Activated CD8-positive, alpha-beta T cell treated with anti-CD3 and anti-CD28 coated beads for 36 hours (primary cell): ENCODE measurements at regions of chr14 and their contacts with region 1.

Region 1: DNA sequence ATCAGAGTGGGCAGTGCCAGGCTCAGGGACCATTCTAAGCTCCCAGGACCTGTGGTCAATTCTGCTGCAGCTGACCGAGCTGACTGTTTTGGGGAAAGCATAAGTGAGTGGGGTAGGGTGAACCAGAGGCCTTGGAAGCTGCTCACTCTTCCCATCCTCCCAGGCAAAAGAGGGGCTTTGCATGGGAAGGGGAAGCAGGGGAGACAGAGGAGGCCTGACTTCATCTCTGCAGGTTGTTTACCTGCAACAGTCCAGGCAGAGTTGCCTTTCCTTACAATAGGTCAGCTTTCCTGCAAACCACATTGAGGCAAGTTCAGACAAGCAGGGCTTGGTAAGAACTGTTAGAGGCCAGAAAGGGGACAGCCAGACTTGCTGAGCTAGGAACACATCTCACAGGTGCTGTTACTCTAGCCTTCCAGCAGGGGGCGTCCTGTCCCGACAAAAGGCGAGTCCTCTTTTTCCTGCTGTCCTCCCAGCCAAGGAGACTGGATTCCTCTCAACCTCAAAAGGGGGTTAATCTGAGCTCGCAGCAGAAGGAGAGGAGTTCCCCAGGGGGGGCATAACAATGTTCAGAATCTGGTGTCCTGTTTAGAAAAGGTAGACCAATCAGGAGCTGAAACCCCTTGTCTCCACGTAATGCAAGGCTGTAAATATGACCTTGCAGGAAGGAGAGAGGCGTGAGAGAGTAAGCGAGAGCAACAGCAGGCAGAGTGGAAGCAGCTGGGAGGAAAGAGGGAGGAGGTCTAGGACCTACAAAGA is 4.3 kb upstream of the DHRS2 start:
- DNase-seq: peak; percentile 73
- ATAC-seq: peak; percentile 89
- H3K4me3 Mint-ChIP-seq: peak overlapping the region; percentile 42
- H3K27ac Mint-ChIP-seq: no peak overlapping the region
- H3K4me1 Mint-ChIP-seq: peaks cover 4% of the 10 kb centered on the region
- H3K27me3 Mint-ChIP-seq: no peaks in the 10 kb centered on the region
- CTCF ChIP-seq: peak; percentile 97

Region 2: GRCh38 chr14:23588884-23589598 is 42.8 kb before region 1 on chr14:
- CTCF ChIA-PET with region 1: interaction called, 65 read pairs
- POLR2A ChIA-PET with region 1: no interaction called
- intact Hi-C with region 1: no loop called
- DNase-seq: peak; percentile 91
- ATAC-seq: peak; percentile 100
- H3K4me3 Mint-ChIP-seq: no peak overlapping the region
- H3K27ac Mint-ChIP-seq: no peak overlapping the region
- H3K4me1 Mint-ChIP-seq: peaks cover 11% of the 10 kb centered on the region
- H3K27me3 Mint-ChIP-seq: peaks cover 9% of the 10 kb centered on the region
- CTCF ChIP-seq: peak; percentile 82

Region 3: DNA sequence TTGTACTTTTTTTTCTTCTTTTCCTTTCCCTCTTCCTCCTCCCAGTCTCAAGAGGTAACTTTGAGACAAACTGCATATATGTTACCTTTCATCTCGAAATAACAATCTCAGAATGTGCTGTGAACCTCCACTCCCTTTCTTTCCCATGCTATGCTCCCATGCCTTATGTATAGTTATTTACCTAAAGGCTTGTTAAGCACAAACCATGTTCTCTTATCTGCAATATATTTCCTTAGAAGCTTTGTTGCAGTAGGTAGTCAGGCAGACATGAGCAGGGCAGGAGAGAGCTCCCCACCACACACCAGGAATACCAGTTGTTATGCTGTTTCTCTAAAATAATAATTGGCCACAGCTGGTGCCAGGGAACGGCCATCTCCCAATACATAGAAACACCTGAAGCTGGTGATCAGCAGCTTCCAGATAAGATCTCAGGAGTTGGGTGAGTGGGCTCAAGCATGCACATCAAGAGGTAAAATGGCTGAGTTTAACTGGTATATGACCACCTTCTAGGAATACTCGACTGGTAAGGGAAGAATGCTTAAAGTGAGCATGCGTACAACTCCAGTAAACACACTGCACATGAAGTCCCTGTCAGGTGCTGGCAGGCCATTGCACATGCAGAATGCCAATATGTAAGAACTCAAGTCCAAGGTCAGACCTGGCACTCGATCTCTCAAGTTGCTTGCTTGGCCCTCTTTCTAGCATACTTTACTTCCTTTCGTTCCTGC is 10.5 kb before region 1 on chr14:
- CTCF ChIA-PET with region 1: interaction called, 44 read pairs
- POLR2A ChIA-PET with region 1: no interaction called
- intact Hi-C with region 1: no loop called
- DNase-seq: no peak
- ATAC-seq: no peak
- H3K4me3 Mint-ChIP-seq: no peak overlapping the region
- H3K27ac Mint-ChIP-seq: no peak overlapping the region
- H3K4me1 Mint-ChIP-seq: peaks cover 9% of the 10 kb centered on the region
- H3K27me3 Mint-ChIP-seq: peaks cover 1% of the 10 kb centered on the region
- CTCF ChIP-seq: no peak

Region 4: GRCh38 chr14:23660290-23661226 is 28.7 kb after region 1 on chr14:
- CTCF ChIA-PET with region 1: interaction called, 12 read pairs
- POLR2A ChIA-PET with region 1: no interaction called
- intact Hi-C with region 1: no loop called
- DNase-seq: peak; percentile 63
- ATAC-seq: peak; percentile 100
- H3K4me3 Mint-ChIP-seq: no peak overlapping the region
- H3K27ac Mint-ChIP-seq: no peak overlapping the region
- H3K4me1 Mint-ChIP-seq: no peaks in the 10 kb centered on the region
- H3K27me3 Mint-ChIP-seq: no peaks in the 10 kb centered on the region
- CTCF ChIP-seq: no peak

Region 5: GRCh38 chr14:23692416-23692815 is 60.5 kb after region 1 on chr14:
- CTCF ChIA-PET with region 1: interaction called, 10 read pairs
- POLR2A ChIA-PET with region 1: no interaction called
- intact Hi-C with region 1: no loop called
- DNase-seq: no peak
- ATAC-seq: no peak
- H3K4me3 Mint-ChIP-seq: no peak overlapping the region
- H3K27ac Mint-ChIP-seq: no peak overlapping the region
- H3K4me1 Mint-ChIP-seq: no peaks in the 10 kb centered on the region
- H3K27me3 Mint-ChIP-seq: peaks cover 24% of the 10 kb centered on the region
- CTCF ChIP-seq: no peak

Region 6: DNA sequence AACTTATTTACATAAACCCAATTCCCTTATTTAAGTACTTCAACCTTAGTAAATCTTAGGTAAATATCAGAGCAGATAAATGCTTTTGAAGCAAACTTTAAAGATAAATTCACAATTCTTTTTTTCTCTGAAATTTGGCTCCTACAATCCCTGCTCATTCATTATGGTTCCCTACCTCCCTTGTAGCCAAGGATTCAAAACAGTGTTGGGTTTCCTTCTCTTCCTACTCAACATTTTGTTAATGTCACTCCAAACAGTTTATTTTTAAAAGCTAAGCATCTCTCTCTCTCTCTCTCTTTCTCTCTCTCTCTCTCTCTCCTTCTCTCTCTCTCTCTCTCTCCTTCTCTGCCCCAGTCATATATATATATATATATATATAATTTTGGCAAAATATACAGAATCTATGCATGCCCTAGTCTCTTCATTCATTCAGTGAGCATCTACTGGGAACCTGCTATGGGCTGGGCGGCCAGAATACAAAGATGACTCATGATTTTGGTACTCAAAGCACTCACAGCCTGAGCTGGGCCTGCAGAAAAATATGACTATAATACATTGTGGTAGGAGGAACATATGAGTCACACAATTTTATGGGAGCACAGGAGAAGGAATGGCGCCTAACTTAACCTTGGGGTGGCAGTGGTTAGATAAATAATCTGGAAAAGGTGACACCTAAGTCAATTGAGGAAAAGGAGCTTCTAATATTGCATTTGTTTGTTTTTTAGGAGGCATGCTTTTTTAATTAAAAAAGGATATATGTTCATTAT is 198.0 kb after region 1 on chr14:
- CTCF ChIA-PET with region 1: no interaction called
- POLR2A ChIA-PET with region 1: no interaction called
- intact Hi-C with region 1: no loop called
- DNase-seq: peak; percentile 5
- ATAC-seq: no peak
- H3K4me3 Mint-ChIP-seq: no peak overlapping the region
- H3K27ac Mint-ChIP-seq: no peak overlapping the region
- H3K4me1 Mint-ChIP-seq: peaks cover 2% of the 10 kb centered on the region
- H3K27me3 Mint-ChIP-seq: no peaks in the 10 kb centered on the region
- CTCF ChIP-seq: no peak

Region 7: GRCh38 chr14:23929822-23930294 is 298.0 kb after region 1 on chr14:
- CTCF ChIA-PET with region 1: interaction called, 45 read pairs
- POLR2A ChIA-PET with region 1: no interaction called
- intact Hi-C with region 1: no loop called
- DNase-seq: peak; percentile 95
- ATAC-seq: peak; percentile 97
- H3K4me3 Mint-ChIP-seq: no peak overlapping the region
- H3K27ac Mint-ChIP-seq: no peak overlapping the region
- H3K4me1 Mint-ChIP-seq: no peaks in the 10 kb centered on the region
- H3K27me3 Mint-ChIP-seq: no peaks in the 10 kb centered on the region
- CTCF ChIP-seq: peak; percentile 98